B cell (primary cell): ENCODE measurements at regions of chr4 and their contacts with region 1.

Region 1: DNA sequence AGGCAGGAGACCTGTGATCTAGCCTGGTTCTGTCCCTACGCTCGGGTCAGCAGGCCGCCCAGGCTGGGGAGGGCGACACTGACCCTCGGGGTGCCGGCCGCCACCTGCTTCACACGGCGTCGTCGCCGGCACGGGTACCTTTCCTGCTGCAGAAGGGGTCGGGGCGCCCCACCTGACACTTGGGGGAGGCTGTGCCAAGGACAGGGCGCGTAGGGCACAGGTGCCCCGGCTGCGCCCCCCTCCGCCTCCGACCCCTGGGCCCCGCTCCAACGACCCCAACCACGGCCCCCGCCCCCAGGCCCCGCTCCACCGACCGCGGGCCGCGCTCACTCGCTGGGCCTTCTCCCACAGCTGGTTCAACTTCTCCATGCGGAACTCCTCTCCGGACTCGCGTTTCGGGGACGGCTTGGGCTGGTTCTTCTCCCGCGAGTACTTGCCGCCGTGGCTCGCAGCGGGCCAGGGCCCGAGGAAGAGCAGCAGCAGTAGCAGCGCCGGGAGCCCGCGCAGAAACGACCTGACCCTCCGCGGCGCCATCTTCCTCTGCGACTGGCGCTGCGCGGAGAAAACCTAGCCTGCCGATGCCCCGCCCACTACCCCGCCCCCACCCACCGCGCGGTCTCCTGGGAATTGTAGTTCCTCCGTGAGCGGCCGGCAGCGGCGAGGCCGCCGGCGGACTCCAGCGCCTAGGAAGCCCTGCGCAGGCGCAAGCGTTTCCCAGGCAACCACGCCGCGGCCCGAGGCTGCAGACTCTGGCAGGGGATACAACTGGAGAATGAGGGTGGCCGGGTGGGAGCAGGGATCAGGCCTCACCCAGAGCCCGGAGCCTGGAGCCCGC is at the start of gene LRPAP1:
- DNase-seq: peak; percentile 92
- ATAC-seq: peak; percentile 91
- H3K4me3 ChIP-seq: peak within 1 kb of the TSS; percentile 70 to 98 (median 85)
- H3K4me3 Mint-ChIP-seq: peak within 1 kb of the TSS; percentile 100
- H3K27ac ChIP-seq: peak within 1 kb of the TSS; percentile 62 to 76
- H3K27ac Mint-ChIP-seq: peak within 1 kb of the TSS; percentile 96
- H3K4me1 ChIP-seq: peaks cover 29 to 46% of the 10 kb centered on the region in 2 donors
- H3K4me1 Mint-ChIP-seq: peaks cover 39% of the 10 kb centered on the region
- H3K27me3 ChIP-seq: peaks cover 0 to 3% (median 0%) of the 10 kb centered on the region in 4 experiments
- H3K27me3 Mint-ChIP-seq: peaks cover 5% of the 10 kb centered on the region
- CTCF ChIP-seq: no peak
- total RNA-seq, gene LRPAP1: 86.6 and 86.8 TPM in 2 replicates

Region 2: DNA sequence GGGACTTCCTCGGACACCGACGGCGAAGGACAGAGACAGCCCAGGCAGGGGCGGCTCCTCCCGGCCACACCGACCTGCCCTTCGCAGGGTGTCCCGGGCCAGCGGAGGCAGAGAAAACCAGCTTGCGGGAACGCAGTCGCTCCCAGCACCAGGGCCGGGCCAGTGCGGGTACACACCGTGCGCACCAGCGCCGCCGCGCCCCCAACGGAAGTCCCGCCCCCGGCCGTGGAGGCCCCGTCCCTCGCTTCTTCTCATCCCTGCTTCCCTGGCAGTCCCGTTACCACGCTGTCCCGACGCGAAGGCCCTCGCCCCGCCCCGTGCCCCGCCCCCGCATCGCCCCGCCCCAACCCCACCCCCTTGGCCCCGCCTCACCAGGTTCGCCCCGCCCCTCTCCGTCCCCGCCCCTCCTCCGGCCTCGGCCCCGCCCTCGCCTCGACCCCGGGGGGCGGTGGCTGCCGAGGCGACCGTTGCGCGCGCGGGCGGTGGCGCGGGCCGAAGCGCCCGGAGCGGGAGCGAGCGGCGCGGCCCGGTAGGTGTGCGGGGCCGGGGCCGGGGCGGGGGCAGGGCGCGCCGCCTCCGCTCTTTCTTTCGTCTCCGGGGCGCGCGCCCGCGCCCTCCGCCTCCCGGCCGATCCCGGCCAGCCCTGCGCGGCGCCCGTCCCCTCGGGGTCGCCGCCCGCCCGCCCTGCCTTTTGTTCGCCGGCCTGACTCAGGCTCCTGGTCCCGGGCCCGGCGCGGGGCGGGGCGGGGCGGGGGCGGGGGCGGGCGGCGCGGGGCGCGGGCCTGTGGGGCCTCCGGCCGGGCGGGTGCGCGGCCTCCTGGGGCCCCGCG is 239.3 kb before region 1 on chr4 and contains the start of gene RGS12:
- CTCF ChIA-PET with region 1: no interaction called
- POLR2A ChIA-PET with region 1: no interaction called
- intact Hi-C with region 1: loop called (anchors 2 kb)
- DNase-seq: peak; percentile 82
- ATAC-seq: peak; percentile 82
- H3K4me3 ChIP-seq: peak within 1 kb of the TSS; percentile 8 to 80 (median 72)
- H3K4me3 Mint-ChIP-seq: peak within 1 kb of the TSS; percentile 89
- H3K27ac ChIP-seq: peak within 1 kb of the TSS in 1 of 2 donors; percentile 48
- H3K27ac Mint-ChIP-seq: peak within 1 kb of the TSS; percentile 81
- H3K4me1 ChIP-seq: peaks cover 7 to 17% of the 10 kb centered on the region in 2 donors
- H3K4me1 Mint-ChIP-seq: peaks cover 13% of the 10 kb centered on the region
- H3K27me3 ChIP-seq: peaks cover 0 to 20% (median 3%) of the 10 kb centered on the region in 4 experiments
- H3K27me3 Mint-ChIP-seq: peaks cover 14% of the 10 kb centered on the region
- CTCF ChIP-seq: no peak
- total RNA-seq, gene RGS12: 13.1 and 13.9 TPM in 2 replicates

Region 3: DNA sequence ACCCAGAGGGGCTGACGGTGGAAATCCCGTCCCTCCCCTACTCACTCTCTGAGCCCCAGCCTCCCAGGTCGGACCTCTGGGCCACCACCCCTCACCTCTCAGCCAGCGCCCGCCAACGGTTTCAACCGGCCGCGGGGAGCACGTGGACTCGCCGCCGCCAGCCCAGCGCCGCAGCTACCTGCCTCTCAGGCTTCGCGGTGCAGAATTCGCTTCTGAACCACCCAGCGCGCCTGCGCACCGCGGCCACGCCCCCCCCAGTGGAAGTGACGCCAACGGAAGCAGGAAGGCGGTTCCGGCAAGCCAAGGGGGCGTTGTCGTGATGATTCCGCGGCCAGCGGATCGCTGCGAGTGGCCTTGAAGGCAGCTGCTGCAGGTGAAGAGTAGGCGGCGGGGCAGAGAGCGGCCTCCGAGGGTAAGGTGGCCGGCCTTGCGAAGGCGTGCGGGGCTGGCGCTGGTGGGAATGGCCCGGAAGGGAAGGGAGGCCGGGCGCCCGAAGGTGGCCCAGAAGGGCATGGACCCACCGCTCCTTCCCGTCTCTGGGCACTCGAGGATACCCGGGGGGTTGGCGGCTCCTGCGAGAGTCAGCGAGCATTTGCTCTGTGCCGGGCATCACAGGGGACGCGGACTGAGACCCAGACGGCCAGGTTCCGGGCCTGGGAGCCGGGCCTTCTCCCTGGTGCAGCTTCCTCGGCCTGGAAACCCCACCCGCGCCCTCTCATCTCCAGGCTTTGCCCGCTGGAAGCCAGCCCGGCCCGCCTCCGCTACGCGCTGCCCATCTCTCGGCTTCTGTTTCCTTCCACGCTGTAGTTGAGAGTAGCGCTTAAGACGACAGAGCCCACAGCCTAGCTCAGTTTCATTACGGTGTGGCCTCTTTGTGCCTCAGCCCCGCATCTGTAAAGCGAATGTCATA is 758.1 kb after region 1 on chr4 and contains the starts of genes LYAR and ZBTB49:
- CTCF ChIA-PET with region 1: no interaction called
- POLR2A ChIA-PET with region 1: no interaction called
- intact Hi-C with region 1: loop called (anchors 10 kb)
- DNase-seq: peak; percentile 93
- ATAC-seq: peak; percentile 92
- H3K4me3 ChIP-seq: peak within 1 kb of the TSS; percentile 63 to 88 (median 74)
- H3K4me3 Mint-ChIP-seq: peak within 1 kb of the TSS; percentile 98
- H3K27ac ChIP-seq: peak within 1 kb of the TSS; percentile 47 to 76
- H3K27ac Mint-ChIP-seq: peak within 1 kb of the TSS; percentile 92
- H3K4me1 ChIP-seq: peaks cover 19 to 22% of the 10 kb centered on the region in 2 donors
- H3K4me1 Mint-ChIP-seq: peaks cover 46% of the 10 kb centered on the region
- H3K27me3 ChIP-seq: no peaks in the 10 kb centered on the region
- H3K27me3 Mint-ChIP-seq: no peaks in the 10 kb centered on the region
- CTCF ChIP-seq: no peak
- total RNA-seq, gene LYAR: 11.4 and 11.5 TPM in 2 replicates
- total RNA-seq, gene ZBTB49: 16.9 and 17.8 TPM in 2 replicates